ENCODE measurements at regions of chr1 and their contacts with region 1.

Region 1: GRCh38 chr1:157138220-157139051 is at the start of gene ETV3:
- DNase-seq: peak; percentile 93 to 94 (median 93)
- ATAC-seq: peak; percentile 97 to 99 (median 98)
- H3K4me3 ChIP-seq: peak within 1 kb of the TSS; percentile 64 to 99 (median 89)
- H3K27ac ChIP-seq: peak within 1 kb of the TSS; percentile 74 to 99 (median 97)
- H3K4me1 ChIP-seq: peaks cover 0 to 41% (median 22%) of the 10 kb centered on the region in 12 donors
- H3K27me3 ChIP-seq: no peaks in the 10 kb centered on the region
- CTCF ChIP-seq: no peak
- POLR2A ChIP-seq: peak; percentile 38 to 89
- total RNA-seq, gene ETV3: 9.4 to 24.3 (median 16.5) TPM

Region 2: DNA sequence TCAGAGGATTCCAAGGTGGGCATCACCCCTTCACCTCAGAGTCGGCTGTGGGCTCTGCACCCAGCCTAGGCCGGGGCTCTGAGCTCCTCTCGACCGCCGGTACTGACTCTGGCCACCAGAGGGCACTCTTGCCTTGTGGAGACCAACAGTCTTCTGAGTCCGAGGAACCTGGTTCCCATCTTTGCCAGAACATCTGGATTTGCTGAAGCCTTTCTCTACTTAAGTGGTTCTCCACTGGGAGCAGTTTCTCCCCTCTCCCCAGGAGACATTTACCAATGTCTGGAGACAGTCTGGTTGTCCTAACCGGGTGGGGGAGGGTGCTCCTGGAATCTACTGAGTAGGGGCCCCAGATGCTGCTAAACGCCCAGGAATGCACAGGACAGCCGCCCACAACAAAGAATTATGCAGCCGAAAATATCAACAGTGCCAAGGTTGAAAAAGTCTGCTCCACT is 48.2 kb before region 1 on chr1:
- intact Hi-C with region 1: loop called in 3 of 10 experiments (anchors 5 kb)
- DNase-seq: peak; percentile 84 to 93 (median 87)
- ATAC-seq: peak; percentile 74 to 90 (median 86)
- H3K4me3 ChIP-seq: no peak overlapping the region
- H3K27ac ChIP-seq: peak overlapping the region in 2 of 12 donors; percentile 14 to 24
- H3K4me1 ChIP-seq: peaks cover 0 to 21% (median 5%) of the 10 kb centered on the region in 12 donors
- H3K27me3 ChIP-seq: no peaks in the 10 kb centered on the region
- CTCF ChIP-seq: peak; percentile 90 to 98 (median 96)
- POLR2A ChIP-seq: no peak

Region 3: GRCh38 chr1:157156058-157156541 is 17.7 kb after region 1 on chr1:
- intact Hi-C with region 1: loop called in 3 of 10 experiments (anchors 1 to 2 kb)
- DNase-seq: peak; percentile 70 to 87 (median 73)
- ATAC-seq: peak; percentile 43 to 83 (median 72)
- H3K4me3 ChIP-seq: peak overlapping the region in 7 of 12 donors; percentile 8 to 34 (median 15)
- H3K27ac ChIP-seq: peak overlapping the region in 2 of 12 donors; percentile 23 to 38
- H3K4me1 ChIP-seq: peaks cover 10 to 31% (median 22%) of the 10 kb centered on the region in 12 donors
- H3K27me3 ChIP-seq: peaks cover 0 to 4% (median 0%) of the 10 kb centered on the region in 9 donors
- CTCF ChIP-seq: peak; percentile 91 to 99 (median 98)
- POLR2A ChIP-seq: no peak

Region 4: DNA sequence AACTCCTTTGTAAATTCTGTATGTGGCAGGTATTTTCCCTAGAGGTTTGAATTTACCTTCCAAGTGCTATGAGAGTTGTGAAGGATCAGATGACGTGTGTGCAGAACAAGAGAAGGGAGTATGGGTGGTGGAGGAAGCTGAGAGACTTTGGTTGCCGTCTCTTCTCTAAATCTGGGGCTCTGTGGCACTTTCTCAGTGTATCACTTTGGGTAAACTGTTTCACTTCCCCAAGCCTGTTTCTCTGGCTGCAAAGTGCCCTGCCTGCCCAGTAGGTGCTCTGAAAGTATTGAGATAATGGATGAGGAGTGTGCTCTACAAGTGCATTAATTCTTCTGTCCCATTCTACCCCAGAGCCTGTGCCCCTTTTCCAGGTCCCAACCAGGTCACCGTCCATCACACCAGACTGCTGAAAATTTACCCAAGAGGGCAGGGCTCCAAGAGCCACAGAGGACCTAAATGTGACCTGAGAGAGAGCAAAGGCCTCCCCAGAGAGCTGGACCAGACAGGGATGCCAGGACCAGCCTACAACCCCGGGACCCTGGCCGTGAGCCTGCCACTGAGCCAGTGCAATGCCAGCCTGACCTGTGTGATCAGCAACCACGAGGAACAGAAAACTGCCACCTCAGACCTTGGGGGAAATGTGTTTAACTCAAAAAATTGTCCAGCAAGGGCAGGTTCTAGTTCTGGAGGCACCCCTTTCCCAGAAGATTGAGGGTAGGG is 131.4 kb after region 1 on chr1:
- intact Hi-C with region 1: no loop called
- DNase-seq: no peak
- ATAC-seq: no peak
- H3K4me3 ChIP-seq: no peak overlapping the region
- H3K27ac ChIP-seq: no peak overlapping the region
- H3K4me1 ChIP-seq: no peaks in the 10 kb centered on the region
- H3K27me3 ChIP-seq: peaks cover 0 to 10% (median 0%) of the 10 kb centered on the region in 9 donors
- CTCF ChIP-seq: no peak
- POLR2A ChIP-seq: no peak

Measured in heart left ventricle (tissue), 16 donors.